ENCODE measurements at regions of chr10 and their contacts with region 1.

Region 1: GRCh38 chr10:10520491-10521385 is 496.9 kb upstream of the CELF2 start:
- DNase-seq: peak; percentile 32
- ATAC-seq: peak; percentile 88
- H3K4me3 Mint-ChIP-seq: no peak overlapping the region
- H3K27ac Mint-ChIP-seq: peak overlapping the region; percentile 67
- H3K4me1 Mint-ChIP-seq: peaks cover 18% of the 10 kb centered on the region
- H3K27me3 Mint-ChIP-seq: peaks cover 16% of the 10 kb centered on the region

Region 2: DNA sequence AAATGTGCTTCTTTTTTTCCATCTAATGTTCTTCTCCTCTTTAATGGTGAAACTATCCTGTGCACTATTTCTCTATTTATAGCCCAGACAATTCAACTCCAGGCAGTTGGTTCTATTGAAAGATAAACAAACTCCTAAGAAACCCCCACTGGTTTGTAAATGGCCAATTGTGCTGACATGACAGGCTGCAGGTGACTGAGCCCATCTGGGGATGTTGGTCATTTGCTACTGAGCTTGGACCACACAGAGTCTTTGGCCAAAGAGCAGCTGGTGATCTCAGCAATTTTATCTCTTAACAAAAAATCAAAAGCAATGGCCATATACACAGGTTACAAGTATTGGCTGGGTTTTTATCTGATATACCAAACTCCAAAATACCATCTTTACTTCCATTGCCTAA is 134.9 kb before region 1 on chr10:
- CTCF ChIA-PET with region 1: no interaction called
- POLR2A ChIA-PET with region 1: no interaction called
- intact Hi-C with region 1: no loop called
- DNase-seq: no peak
- ATAC-seq: no peak
- H3K4me3 Mint-ChIP-seq: no peak overlapping the region
- H3K27ac Mint-ChIP-seq: no peak overlapping the region
- H3K4me1 Mint-ChIP-seq: no peaks in the 10 kb centered on the region
- H3K27me3 Mint-ChIP-seq: peaks cover 13% of the 10 kb centered on the region

Region 3: GRCh38 chr10:10418387-10418786 is 102.4 kb before region 1 on chr10:
- CTCF ChIA-PET with region 1: no interaction called
- POLR2A ChIA-PET with region 1: no interaction called
- intact Hi-C with region 1: loop called in 1 of 2 experiments (anchors 2 kb)
- DNase-seq: peak; percentile 38
- ATAC-seq: peak; percentile 96
- H3K4me3 Mint-ChIP-seq: no peak overlapping the region
- H3K27ac Mint-ChIP-seq: peak overlapping the region; percentile 28
- H3K4me1 Mint-ChIP-seq: peaks cover 35% of the 10 kb centered on the region
- H3K27me3 Mint-ChIP-seq: no peaks in the 10 kb centered on the region

Region 4: DNA sequence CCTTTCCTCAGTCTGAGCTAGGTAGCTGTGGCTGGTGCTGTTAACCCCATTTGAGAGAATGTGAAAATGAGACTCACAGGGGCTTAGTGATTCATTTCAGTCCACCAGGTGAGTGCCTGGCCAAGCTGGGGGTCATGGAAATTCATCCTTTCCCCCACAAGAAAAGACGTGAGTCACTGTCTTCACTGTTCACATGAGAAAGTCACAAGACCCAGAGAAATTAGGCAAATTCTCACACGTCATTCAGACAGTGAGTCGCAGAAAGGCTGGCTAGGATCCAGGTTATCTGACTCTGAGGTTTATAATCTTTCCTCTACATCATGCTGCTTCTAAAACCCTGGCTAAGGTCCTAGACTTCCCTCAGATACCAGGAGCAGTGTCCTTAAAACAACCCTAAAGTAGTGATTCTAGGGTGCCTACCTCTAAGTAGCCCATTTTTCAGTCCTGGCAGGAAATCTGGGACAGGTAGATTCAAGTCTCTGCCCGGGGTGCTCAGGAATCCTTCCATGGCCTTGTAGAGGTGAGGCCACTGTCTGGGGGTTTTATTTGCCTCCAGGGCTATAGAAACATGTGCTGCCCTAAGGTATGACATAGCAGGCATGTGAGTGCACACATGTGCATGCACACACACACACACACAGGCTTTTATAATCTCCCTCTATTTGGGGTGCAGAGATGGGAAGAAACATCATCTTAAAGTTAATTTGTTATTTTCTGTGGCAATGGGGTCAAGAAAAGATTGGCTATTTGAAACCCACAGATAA is 69.0 kb after region 1 on chr10:
- CTCF ChIA-PET with region 1: no interaction called
- POLR2A ChIA-PET with region 1: no interaction called
- intact Hi-C with region 1: loop called in 1 of 2 experiments (anchors 1 kb)
- DNase-seq: peak; percentile 59
- ATAC-seq: peak; percentile 88
- H3K4me3 Mint-ChIP-seq: no peak overlapping the region
- H3K27ac Mint-ChIP-seq: no peak overlapping the region
- H3K4me1 Mint-ChIP-seq: peaks cover 16% of the 10 kb centered on the region
- H3K27me3 Mint-ChIP-seq: peaks cover 25% of the 10 kb centered on the region